ENCODE measurements at regions of chr7 and their contacts with region 1.

Region 1: GRCh38 chr7:52775876-52776275 is 259.6 kb upstream of the POM121L12 start:
- DNase-seq: no peak
- ATAC-seq: no peak
- H3K4me3 Mint-ChIP-seq: no peak overlapping the region
- H3K27ac Mint-ChIP-seq: no peak overlapping the region
- H3K4me1 Mint-ChIP-seq: no peaks in the 10 kb centered on the region
- H3K27me3 Mint-ChIP-seq: no peaks in the 10 kb centered on the region
- CTCF ChIP-seq: no peak

Region 2: DNA sequence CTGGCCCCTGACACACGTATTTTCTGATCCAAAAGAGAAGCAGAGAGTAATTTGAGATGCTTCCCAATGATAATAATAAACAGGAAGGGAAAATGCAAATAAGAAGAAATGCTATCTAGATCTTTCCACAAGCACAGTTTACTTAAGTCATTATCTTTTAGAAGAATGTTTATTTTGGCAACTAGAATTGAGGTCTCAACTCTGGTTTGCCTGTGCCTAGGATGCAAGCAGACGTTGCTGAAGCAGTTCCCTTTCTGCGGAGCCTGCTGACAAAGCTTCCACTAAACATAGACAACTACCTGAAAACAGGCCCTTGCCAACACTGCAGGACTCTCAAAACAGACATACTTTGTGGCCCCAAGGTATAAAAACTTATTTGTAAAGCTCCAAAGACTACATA is 56.2 kb before region 1 on chr7:
- CTCF ChIA-PET with region 1: no interaction called
- POLR2A ChIA-PET with region 1: no interaction called
- intact Hi-C with region 1: loop called (anchors 10 kb)
- DNase-seq: no peak
- ATAC-seq: no peak
- H3K4me3 Mint-ChIP-seq: no peak overlapping the region
- H3K27ac Mint-ChIP-seq: no peak overlapping the region
- H3K4me1 Mint-ChIP-seq: no peaks in the 10 kb centered on the region
- H3K27me3 Mint-ChIP-seq: no peaks in the 10 kb centered on the region
- CTCF ChIP-seq: no peak